ENCODE measurements at regions of chr19 and their contacts with region 1.

Region 1: DNA sequence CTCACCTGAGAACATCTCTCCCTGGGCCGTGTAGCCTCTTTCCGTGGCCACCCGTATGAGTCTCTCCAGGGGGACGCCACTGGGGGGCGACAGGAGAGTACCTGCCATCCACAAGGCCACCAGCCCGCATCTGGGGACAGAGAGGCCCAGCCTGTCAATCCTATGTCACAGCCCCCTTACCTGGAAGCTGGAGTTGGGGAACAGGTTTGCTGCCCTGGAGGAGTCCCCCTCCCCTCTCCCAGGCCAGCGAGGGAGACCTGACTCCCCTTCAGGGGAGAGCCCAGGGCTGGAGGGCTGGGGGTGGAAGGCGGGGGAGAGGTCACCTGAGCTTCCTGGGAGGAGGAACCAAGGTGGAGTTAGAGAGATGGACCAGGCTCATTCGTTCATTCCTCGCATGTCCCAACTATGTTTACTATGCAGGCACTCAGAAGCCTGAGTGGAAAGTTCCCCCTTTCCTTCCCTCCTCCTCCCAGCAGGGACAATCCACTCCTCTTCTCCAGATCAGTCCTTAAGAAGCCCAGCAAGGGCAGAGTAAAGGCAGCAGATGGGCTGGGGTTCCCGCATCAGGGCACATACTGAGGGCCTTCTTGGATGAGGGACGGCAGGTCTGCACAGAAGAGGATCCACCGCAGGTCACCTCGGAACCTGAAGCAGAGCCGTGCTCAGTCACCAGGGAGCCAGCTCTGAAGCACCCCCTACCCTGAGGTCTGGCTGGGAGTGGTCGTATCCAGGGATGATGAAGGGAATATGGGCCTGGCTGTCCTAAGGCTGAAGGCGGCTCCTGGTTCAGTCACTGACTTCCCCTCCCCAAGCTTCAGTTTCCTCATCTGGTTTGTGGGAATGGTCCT is 5.5 kb downstream of the ACTMAP start:
- DNase-seq: no peak
- ATAC-seq: peak; percentile 25
- H3K4me3 Mint-ChIP-seq: no peak overlapping the region
- H3K27ac Mint-ChIP-seq: no peak overlapping the region
- H3K4me1 Mint-ChIP-seq: peaks cover 16% of the 10 kb centered on the region
- H3K27me3 Mint-ChIP-seq: no peaks in the 10 kb centered on the region
- CTCF ChIP-seq: no peak

Region 2: DNA sequence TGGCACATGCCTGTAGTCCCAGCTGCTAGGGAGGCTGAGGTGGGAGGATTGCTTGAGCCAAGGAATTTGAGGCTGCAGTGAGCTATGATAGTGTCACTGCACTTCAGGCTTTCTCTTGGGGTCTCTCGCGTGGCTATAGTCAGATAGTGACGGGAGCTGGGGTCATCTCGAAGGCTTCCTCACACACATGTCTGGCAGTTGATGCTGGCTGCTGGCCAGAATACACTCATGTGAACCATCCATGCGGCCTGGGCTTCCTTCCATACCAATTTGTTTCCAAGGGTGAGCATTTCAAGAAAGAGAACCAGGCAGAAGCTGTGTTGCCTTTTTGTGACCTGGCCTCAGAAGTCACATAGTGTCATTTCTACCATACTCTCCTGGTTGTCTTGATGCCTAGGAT is 939.7 kb before region 1 on chr19:
- CTCF ChIA-PET with region 1: no interaction called
- POLR2A ChIA-PET with region 1: no interaction called
- intact Hi-C with region 1: no loop called
- DNase-seq: no peak
- ATAC-seq: no peak
- H3K4me3 Mint-ChIP-seq: no peak overlapping the region
- H3K27ac Mint-ChIP-seq: no peak overlapping the region
- H3K4me1 Mint-ChIP-seq: no peaks in the 10 kb centered on the region
- H3K27me3 Mint-ChIP-seq: peaks cover 21% of the 10 kb centered on the region
- CTCF ChIP-seq: no peak

Region 3: GRCh38 chr19:40806488-40807468 is 62.0 kb after region 1 on chr19:
- CTCF ChIA-PET with region 1: interaction called, 10 read pairs
- POLR2A ChIA-PET with region 1: interaction called, 85 read pairs
- intact Hi-C with region 1: no loop called
- DNase-seq: peak; percentile 60
- ATAC-seq: peak; percentile 18
- H3K4me3 Mint-ChIP-seq: peak overlapping the region; percentile 69
- H3K27ac Mint-ChIP-seq: peak overlapping the region; percentile 87
- H3K4me1 Mint-ChIP-seq: peaks cover 84% of the 10 kb centered on the region
- H3K27me3 Mint-ChIP-seq: no peaks in the 10 kb centered on the region
- CTCF ChIP-seq: no peak

Measured in activated B cell treated with CpG ODN at 0.5 μM for 24 hours (primary cell).